ENCODE measurements at regions of chr10 and their contacts with region 1.

Region 1: GRCh38 chr10:32445740-32446535 is at the start of gene CCDC7:
- DNase-seq: peak; percentile 87
- ATAC-seq: peak; percentile 98
- H3K4me3 Mint-ChIP-seq: peak within 1 kb of the TSS; percentile 98
- H3K27ac Mint-ChIP-seq: peak within 1 kb of the TSS; percentile 99
- H3K4me1 Mint-ChIP-seq: peaks cover 13% of the 10 kb centered on the region
- H3K27me3 Mint-ChIP-seq: peaks cover 2% of the 10 kb centered on the region
- total RNA-seq, gene CCDC7: 15.7 to 15.8 TPM

Region 2: DNA sequence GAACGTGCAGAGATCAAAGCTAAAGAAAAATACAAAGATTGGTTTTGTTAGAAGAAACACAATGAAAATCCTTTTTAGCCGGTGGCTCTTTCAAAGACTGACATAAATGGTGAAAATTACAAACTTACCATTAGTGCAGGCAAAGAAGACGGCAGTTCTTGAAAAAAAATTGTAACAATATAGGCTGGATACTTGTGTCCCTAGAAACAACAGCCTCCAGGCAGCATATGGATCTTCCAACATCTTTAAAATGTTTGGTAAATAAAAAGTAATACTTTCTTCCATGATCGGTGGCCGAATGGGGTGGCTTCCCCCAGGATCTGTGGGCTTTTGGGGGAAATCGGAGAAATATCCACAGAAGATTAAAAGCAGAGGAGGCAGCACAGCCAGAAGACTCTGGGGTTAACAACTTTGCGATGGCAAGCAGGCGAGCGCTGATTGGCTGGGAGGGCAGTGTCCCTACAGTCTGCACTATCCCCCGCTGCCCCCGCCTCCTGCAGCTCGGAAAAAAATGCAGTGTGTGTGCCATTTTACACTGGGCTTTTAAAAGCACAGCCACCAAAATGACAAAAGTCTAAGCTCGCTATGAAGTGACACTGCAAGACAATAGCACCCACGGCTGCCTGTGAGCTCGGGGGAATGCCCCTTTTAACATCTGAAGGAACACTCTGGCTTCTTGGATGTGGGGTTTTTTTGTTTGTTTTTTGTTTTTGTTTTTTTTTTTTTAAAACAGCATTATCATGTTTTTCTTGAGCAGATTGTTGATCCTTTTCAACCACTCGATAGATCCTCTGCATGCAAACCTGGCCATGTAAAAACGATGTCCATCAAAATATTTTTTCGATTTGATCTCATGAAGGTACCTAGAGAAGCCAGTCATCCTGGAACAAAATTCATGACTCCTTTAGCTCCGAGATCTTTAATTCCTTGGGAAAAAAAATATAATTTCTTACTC is 67.3 kb before region 1 on chr10:
- CTCF ChIA-PET with region 1: interaction called, 22 read pairs
- POLR2A ChIA-PET with region 1: interaction called, 37 read pairs
- DNase-seq: peak; percentile 96
- ATAC-seq: peak; percentile 99
- H3K4me3 Mint-ChIP-seq: no peak overlapping the region
- H3K27ac Mint-ChIP-seq: no peak overlapping the region
- H3K4me1 Mint-ChIP-seq: peaks cover 18% of the 10 kb centered on the region
- H3K27me3 Mint-ChIP-seq: no peaks in the 10 kb centered on the region

Region 3: GRCh38 chr10:32459051-32459698 is 13.2 kb after region 1 on chr10:
- CTCF ChIA-PET with region 1: interaction called, 9 read pairs
- POLR2A ChIA-PET with region 1: interaction called, 15 read pairs
- DNase-seq: peak; percentile 83
- ATAC-seq: peak; percentile 99
- H3K4me3 Mint-ChIP-seq: peak overlapping the region; percentile 38
- H3K27ac Mint-ChIP-seq: peak overlapping the region; percentile 72
- H3K4me1 Mint-ChIP-seq: peaks cover 32% of the 10 kb centered on the region
- H3K27me3 Mint-ChIP-seq: no peaks in the 10 kb centered on the region

Measured in activated CD8-positive, alpha-beta T cell treated with anti-CD3 and anti-CD28 coated beads, Interleukin-2, amount 10 ng/mL, durations not matched to agents 7 days and 5 days (primary cell).